T-cell (primary cell): ENCODE measurements at regions of chr16 and their contacts with region 1.

Region 1: DNA sequence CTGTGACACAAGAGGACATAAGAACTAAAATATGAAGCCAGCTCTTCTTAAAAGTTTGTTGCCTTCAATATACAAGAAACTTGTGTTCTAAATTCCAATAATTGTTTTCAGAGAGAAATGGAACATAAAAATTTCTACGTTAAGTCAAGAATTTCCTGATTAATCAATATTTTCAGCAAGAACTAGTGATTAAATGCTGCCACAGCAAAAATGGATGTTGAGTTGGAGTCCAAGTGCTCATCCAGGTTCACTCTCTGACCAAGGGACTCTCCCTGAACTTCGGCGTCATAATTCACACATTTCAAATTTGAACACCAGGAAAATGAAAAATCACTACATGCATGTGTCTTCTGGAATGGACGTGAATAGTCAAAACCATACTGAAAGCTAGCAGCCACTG is 1263.6 kb upstream of the GOT2 start:
- DNase-seq: no peak
- ATAC-seq: no peak
- H3K4me3 ChIP-seq: no peak overlapping the region
- H3K4me3 Mint-ChIP-seq: no peak overlapping the region
- H3K27ac ChIP-seq: no peak overlapping the region
- H3K27ac Mint-ChIP-seq: no peak overlapping the region
- H3K4me1 ChIP-seq: no peaks in the 10 kb centered on the region
- H3K4me1 Mint-ChIP-seq: no peaks in the 10 kb centered on the region
- H3K27me3 ChIP-seq: no peaks in the 10 kb centered on the region
- H3K27me3 Mint-ChIP-seq: no peaks in the 10 kb centered on the region

Region 2: DNA sequence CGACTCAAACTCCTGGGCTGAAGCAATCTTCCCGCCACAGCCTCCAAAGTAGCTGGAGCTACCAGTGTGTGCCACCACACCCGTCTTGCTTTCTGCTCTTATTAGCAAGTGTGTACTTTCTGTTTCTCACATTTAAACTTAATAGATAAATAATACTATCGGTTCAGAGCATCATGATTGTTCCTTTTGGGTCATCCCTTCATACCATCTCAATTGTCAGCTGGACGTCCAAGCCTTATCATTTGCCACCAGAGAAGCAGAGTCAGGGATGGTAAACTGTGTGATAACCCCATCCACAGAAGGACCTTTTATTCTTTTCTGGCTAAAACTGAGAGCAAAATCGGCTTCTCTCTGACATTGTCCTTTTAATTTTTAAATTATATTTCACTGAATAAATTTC is 983.8 kb before region 1 on chr16:
- CTCF ChIA-PET with region 1: no interaction called
- POLR2A ChIA-PET with region 1: no interaction called
- DNase-seq: no peak
- ATAC-seq: no peak
- H3K4me3 ChIP-seq: no peak overlapping the region
- H3K4me3 Mint-ChIP-seq: no peak overlapping the region
- H3K27ac ChIP-seq: no peak overlapping the region
- H3K27ac Mint-ChIP-seq: no peak overlapping the region
- H3K4me1 ChIP-seq: no peaks in the 10 kb centered on the region
- H3K4me1 Mint-ChIP-seq: no peaks in the 10 kb centered on the region
- H3K27me3 ChIP-seq: no peaks in the 10 kb centered on the region
- H3K27me3 Mint-ChIP-seq: no peaks in the 10 kb centered on the region

Region 3: GRCh38 chr16:59941594-59941993 is 56.1 kb before region 1 on chr16:
- CTCF ChIA-PET with region 1: no interaction called
- POLR2A ChIA-PET with region 1: interaction called in 1 of 2 experiments, 10 read pairs
- DNase-seq: no peak
- ATAC-seq: no peak
- H3K4me3 ChIP-seq: no peak overlapping the region
- H3K4me3 Mint-ChIP-seq: no peak overlapping the region
- H3K27ac ChIP-seq: no peak overlapping the region
- H3K27ac Mint-ChIP-seq: no peak overlapping the region
- H3K4me1 ChIP-seq: no peaks in the 10 kb centered on the region
- H3K4me1 Mint-ChIP-seq: no peaks in the 10 kb centered on the region
- H3K27me3 ChIP-seq: no peaks in the 10 kb centered on the region
- H3K27me3 Mint-ChIP-seq: no peaks in the 10 kb centered on the region